CD14-positive monocyte (primary cell): ENCODE measurements at regions of chr1 and their contacts with region 1.

Region 1: GRCh38 chr1:180415985-180416633 is 86.3 kb downstream of the ACBD6 start:
- DNase-seq: peak; percentile 24 to 59 (median 50)
- H3K4me3 ChIP-seq: no peak overlapping the region
- H3K4me3 Mint-ChIP-seq: no peak overlapping the region
- H3K27ac ChIP-seq: no peak overlapping the region
- H3K27ac Mint-ChIP-seq: peak overlapping the region in 1 of 7 donors; percentile 11
- H3K4me1 ChIP-seq: peaks cover 7 to 11% of the 10 kb centered on the region in 2 donors
- H3K4me1 Mint-ChIP-seq: peaks cover 12% of the 10 kb centered on the region
- H3K27me3 ChIP-seq: no peaks in the 10 kb centered on the region
- H3K27me3 Mint-ChIP-seq: peaks cover 0 to 1% (median 0%) of the 10 kb centered on the region in 3 donors
- CTCF ChIP-seq: peak; percentile 92

Region 2: DNA sequence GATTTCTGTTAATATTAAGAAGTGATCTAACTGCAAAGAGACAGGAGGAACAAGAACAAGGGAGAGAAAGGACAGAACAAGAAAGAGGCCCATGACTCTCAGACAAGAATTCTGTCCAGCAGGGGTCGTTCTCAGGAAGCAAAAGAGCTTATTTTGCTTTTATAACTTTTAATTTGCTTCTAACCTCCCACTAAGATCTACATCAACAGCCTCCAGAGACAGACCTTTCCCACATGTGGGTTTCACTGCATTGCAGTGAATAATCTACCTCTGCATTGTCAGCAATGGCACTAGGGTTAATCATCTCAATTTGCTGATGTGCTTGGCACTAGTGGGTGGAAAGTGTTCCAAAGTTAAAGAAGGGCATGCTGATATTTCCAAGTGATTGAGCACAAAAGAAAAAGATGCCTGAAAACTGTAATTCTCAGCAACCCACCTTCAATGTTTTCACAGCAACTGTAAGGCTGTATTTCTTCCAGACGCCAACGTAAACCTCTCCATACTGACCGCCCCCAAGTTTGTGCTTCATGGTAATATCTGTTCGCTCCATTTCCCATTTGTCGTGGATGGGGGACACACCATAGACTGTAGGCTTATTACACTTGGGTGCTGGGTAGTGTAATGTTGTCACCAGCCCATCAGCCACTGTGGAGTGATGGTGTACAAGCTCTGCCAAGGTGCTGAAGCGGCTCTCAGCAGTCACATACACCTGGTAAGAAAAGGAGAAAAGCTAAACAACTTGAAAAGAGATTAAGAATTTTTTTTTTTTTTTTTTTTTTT is 1294.8 kb before region 1 on chr1:
- intact Hi-C with region 1: no loop called
- DNase-seq: peak; percentile 32 to 57 (median 34)
- H3K4me3 ChIP-seq: no peak overlapping the region
- H3K4me3 Mint-ChIP-seq: no peak overlapping the region
- H3K27ac ChIP-seq: no peak overlapping the region
- H3K27ac Mint-ChIP-seq: peak overlapping the region in 5 of 7 donors; percentile 39 to 83 (median 54)
- H3K4me1 ChIP-seq: no peaks in the 10 kb centered on the region
- H3K4me1 Mint-ChIP-seq: no peaks in the 10 kb centered on the region
- H3K27me3 ChIP-seq: no peaks in the 10 kb centered on the region
- H3K27me3 Mint-ChIP-seq: no peaks in the 10 kb centered on the region
- CTCF ChIP-seq: peak; percentile 73

Region 3: GRCh38 chr1:180252638-180253536 is 163.2 kb before region 1 on chr1:
- intact Hi-C with region 1: loop called (anchors 2 kb)
- DNase-seq: peak; percentile 72 to 82 (median 76)
- H3K4me3 ChIP-seq: no peak overlapping the region
- H3K4me3 Mint-ChIP-seq: peak overlapping the region in 1 of 2 donors; percentile 46
- H3K27ac ChIP-seq: no peak overlapping the region
- H3K27ac Mint-ChIP-seq: peak overlapping the region in 4 of 7 donors; percentile 16 to 76 (median 36)
- H3K4me1 ChIP-seq: peaks cover 14 to 22% of the 10 kb centered on the region in 2 donors
- H3K4me1 Mint-ChIP-seq: peaks cover 14% of the 10 kb centered on the region
- H3K27me3 ChIP-seq: no peaks in the 10 kb centered on the region
- H3K27me3 Mint-ChIP-seq: peaks cover 9 to 15% (median 12%) of the 10 kb centered on the region in 3 donors
- CTCF ChIP-seq: peak; percentile 93

Region 4: DNA sequence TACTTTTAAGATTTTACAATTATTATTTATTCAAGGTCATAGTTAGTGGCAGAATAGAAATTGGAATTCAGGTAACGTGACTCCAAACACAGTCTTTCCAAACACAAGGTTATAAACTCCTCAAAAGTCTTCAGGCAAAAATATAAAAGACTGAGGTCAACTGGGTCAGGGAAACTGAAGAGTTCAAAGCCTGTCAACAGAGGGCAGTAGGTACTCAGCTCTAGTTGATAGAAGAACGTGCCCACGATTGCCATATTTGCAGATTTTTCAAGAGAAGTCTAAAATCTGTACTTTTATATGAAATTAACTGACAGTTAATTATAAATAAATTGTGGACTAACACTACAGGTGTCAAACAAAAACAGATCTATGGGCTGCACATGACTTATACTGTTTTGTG is 51.1 kb before region 1 on chr1:
- intact Hi-C with region 1: loop called (anchors 10 kb)
- DNase-seq: peak; percentile 32 to 65 (median 39)
- H3K4me3 ChIP-seq: no peak overlapping the region
- H3K4me3 Mint-ChIP-seq: no peak overlapping the region
- H3K27ac ChIP-seq: no peak overlapping the region
- H3K27ac Mint-ChIP-seq: no peak overlapping the region
- H3K4me1 ChIP-seq: peaks cover 9 to 20% of the 10 kb centered on the region in 2 donors
- H3K4me1 Mint-ChIP-seq: peaks cover 17% of the 10 kb centered on the region
- H3K27me3 ChIP-seq: no peaks in the 10 kb centered on the region
- H3K27me3 Mint-ChIP-seq: no peaks in the 10 kb centered on the region
- CTCF ChIP-seq: peak; percentile 68

Region 5: GRCh38 chr1:180382317-180383115 is 33.6 kb before region 1 on chr1:
- intact Hi-C with region 1: no loop called
- DNase-seq: no peak
- H3K4me3 ChIP-seq: no peak overlapping the region
- H3K4me3 Mint-ChIP-seq: no peak overlapping the region
- H3K27ac ChIP-seq: no peak overlapping the region
- H3K27ac Mint-ChIP-seq: peak overlapping the region in 1 of 7 donors; percentile 52
- H3K4me1 ChIP-seq: no peaks in the 10 kb centered on the region
- H3K4me1 Mint-ChIP-seq: peaks cover 2% of the 10 kb centered on the region
- H3K27me3 ChIP-seq: no peaks in the 10 kb centered on the region
- H3K27me3 Mint-ChIP-seq: peaks cover 0 to 2% (median 0%) of the 10 kb centered on the region in 3 donors
- CTCF ChIP-seq: no peak

Region 6: DNA sequence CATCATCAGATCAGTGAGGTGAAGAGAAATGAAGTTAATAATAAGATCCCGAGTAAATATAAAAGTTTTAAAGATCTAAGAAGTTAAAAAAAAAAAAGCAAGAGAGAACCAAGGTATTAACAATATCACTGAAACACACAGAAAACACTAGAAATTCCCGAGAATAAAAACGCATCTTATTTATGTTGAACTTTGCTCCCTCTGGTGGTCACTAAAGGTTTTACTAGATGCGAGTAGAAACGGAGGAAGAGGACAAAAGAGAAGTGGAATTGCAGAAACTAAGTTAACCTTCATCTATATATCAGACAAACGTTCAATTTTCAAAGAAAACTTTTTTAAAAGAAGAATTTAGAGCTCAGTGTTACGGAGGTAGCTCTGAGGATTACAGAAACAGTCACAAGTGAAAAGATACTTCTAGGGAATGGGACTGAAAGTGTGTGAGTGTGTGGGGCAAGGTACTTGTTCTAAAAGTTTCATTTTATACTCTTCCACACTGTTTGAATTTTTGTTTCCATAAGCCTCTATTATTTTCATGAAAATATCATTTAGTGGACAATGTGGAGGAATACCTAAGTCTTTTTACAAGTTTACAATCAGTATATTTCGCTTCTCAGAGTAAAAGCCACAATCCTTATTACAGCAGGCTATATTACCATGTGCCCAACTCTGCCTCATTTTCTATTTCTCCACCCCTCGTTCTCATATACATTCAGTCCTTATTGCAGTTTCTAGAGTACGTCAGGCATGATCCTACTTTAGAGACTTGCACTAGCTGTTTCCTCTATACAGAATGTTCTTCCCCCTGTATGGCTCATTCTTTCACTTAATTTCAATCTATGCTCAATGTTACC is 66.5 kb after region 1 on chr1:
- intact Hi-C with region 1: loop called in 1 of 2 experiments (anchors 10 kb)
- DNase-seq: peak; percentile 33 to 64 (median 54)
- H3K4me3 ChIP-seq: peak overlapping the region in 1 of 3 experiments; percentile 15
- H3K4me3 Mint-ChIP-seq: peak overlapping the region in 1 of 2 donors; percentile 65
- H3K27ac ChIP-seq: no peak overlapping the region
- H3K27ac Mint-ChIP-seq: no peak overlapping the region
- H3K4me1 ChIP-seq: peaks cover 0 to 7% of the 10 kb centered on the region in 2 donors
- H3K4me1 Mint-ChIP-seq: peaks cover 11% of the 10 kb centered on the region
- H3K27me3 ChIP-seq: no peaks in the 10 kb centered on the region
- H3K27me3 Mint-ChIP-seq: peaks cover 0 to 2% (median 0%) of the 10 kb centered on the region in 3 donors
- CTCF ChIP-seq: peak; percentile 87